ENCODE measurements at regions of chr9 and their contacts with region 1.

Region 1: DNA sequence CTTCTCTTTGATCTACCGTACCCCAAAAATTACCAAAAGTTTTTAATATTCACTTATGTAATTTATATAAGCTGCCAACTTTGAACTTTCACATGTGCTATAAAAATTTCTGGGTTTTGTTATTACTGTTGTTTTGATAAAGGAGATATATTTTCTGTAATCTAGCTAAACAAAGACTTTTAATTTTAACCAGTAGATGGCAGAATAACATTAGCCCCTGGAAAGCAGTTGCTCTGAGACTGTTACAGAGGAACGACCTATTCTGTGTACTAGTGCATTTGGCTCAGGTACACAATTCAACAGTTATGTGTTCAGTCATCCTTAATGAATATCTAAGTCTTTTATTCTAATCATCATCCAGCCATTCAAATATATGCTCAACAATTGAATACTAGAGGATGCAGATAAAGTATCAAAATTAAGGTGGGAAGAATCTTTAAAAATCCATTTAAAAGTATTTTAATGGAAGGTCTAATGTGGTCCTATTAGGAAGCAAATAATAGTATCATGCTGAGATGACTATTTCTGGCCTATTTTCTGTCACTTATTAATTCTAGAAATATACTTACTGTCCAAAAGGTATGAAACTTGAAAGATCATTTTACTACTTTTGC is 8.6 kb downstream of the KLHL9 start:
- DNase-seq: no peak

Region 2: DNA sequence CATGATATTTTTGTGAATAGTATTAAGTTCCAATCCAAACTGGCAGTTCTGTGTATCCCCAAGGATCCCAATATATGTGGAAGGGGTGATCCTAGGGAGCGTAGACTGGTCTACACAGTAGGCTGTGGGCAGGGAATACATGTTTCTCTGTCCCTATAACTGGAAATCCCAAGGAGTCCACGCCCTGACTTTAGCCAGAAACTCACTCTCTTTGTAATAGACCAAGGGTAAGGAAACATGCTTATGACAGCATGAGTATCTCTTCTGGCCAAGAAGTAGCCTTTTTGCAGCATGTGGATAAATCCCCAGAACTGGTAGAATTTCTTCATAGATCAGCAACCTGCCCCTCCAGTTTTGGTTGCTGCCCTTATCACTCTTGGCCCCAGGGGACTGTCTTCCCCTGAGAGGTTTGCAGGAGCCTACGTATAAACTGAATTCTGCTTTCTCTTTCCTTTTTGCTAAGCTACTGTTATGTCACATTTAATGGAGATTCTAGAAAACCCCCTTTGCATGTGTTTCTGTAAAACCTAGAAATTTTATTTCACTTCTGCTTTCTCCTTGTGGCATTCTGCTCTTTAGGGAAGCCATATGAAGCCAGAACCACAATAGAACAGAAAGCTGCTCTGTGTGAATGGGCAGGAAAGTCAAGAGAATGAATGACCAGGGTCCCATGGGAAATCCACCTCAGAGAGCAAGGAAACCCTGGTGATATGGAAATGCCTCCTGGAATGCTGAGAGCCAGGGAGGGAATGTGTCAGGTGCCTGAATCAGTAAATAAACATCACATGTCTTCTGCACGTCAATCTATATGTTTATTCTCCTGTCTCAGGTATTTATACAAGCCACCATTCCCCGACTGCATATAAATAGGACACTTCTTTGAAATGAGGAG is 55.1 kb after region 1 on chr9:
- intact Hi-C with region 1: no loop called
- DNase-seq: no peak

Region 3: GRCh38 chr9:21395778-21396717 is 69.4 kb after region 1 on chr9:
- intact Hi-C with region 1: loop called in 1 of 2 experiments (anchors 10 kb)
- DNase-seq: no peak

Measured in posterior vena cava (tissue), 2 donors.